ENCODE measurements at regions of chr10 and their contacts with region 1.

Region 1: DNA sequence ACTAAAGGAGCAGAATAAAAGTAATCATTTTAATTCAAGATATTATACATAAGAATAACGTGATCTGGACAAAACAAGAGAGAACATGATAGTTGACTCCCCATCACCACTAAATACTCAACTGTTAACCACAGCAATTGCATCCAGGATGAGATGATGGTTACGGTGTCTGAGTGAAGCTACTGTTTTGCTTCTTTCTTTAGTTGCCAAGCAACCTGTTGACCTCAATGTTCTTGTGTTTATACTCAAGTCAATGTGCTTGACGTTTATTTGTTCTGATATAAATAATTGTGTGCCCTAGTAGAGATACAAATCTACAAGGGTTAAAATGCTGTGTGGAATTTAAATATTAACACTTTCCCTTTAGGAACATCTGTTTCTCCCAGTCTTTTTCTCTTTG is 31.4 kb upstream of the MPP7 start:
- DNase-seq: no peak
- ATAC-seq: no peak
- H3K4me3 ChIP-seq: no peak overlapping the region
- H3K27ac ChIP-seq: no peak overlapping the region
- H3K4me1 ChIP-seq: no peaks in the 10 kb centered on the region
- H3K27me3 ChIP-seq: no peaks in the 10 kb centered on the region
- CTCF ChIP-seq: no peak

Region 2: DNA sequence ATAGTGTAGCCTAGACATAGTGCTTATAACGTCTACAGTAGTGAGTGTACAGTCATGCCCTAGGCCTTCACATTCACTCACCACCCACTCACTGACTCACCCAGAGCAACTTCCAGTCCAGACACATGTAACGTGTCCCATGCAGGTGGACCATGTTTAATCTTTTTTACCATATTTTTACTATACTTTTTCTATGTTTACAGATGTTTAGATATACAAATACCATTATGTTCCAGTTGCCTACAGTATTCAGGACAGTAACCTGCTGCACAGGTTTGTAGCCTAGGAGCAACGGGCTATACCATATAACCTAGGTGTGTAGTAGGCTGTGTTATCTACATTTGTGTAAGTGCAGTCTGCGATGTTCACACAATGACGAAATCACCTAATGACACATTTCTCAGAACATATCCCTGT is 42.4 kb before region 1 on chr10:
- CTCF ChIA-PET with region 1: no interaction called
- POLR2A ChIA-PET with region 1: no interaction called
- in situ Hi-C with region 1: no loop called
- intact Hi-C with region 1: no loop called
- DNase-seq: no peak
- ATAC-seq: no peak
- H3K4me3 ChIP-seq: no peak overlapping the region
- H3K27ac ChIP-seq: no peak overlapping the region
- H3K4me1 ChIP-seq: no peaks in the 10 kb centered on the region
- H3K27me3 ChIP-seq: no peaks in the 10 kb centered on the region
- CTCF ChIP-seq: no peak

Region 3: GRCh38 chr10:28359334-28359733 is 25.0 kb after region 1 on chr10:
- CTCF ChIA-PET with region 1: interaction called, 11 read pairs
- POLR2A ChIA-PET with region 1: no interaction called
- in situ Hi-C with region 1: no loop called
- intact Hi-C with region 1: no loop called
- DNase-seq: no peak
- ATAC-seq: no peak
- H3K4me3 ChIP-seq: no peak overlapping the region
- H3K27ac ChIP-seq: no peak overlapping the region
- H3K4me1 ChIP-seq: no peaks in the 10 kb centered on the region
- H3K27me3 ChIP-seq: no peaks in the 10 kb centered on the region
- CTCF ChIP-seq: no peak

Region 4: DNA sequence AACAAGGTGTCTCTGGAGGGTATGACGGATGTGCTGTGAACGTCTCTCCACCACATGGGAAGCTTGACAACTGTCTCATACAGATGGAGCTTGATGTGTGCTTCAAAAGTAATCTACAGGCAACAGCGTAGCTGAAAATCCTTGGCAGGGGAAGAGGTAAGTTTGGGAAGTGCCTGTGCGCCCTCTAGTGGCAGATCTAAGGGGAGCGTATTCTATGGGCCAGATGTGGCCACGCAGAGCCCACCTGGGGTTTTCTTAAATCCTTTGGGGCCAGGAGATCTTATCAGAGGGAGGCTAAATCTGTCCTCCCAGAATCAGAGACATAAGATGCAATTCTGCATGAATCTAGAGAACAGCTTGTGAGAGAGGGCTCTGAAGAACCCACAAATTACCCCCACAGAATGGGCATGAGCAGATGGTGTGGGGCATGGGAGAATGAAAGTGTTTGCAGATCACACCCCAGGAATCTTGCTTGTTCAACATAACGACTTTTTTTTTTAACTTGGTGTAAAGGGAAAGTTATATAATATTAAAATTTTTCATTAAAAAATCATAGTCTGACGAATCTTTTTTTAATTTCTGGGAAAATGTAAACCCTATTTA is 59.8 kb after region 1 on chr10:
- CTCF ChIA-PET with region 1: interaction called, 11 read pairs
- POLR2A ChIA-PET with region 1: no interaction called
- in situ Hi-C with region 1: no loop called
- intact Hi-C with region 1: no loop called
- DNase-seq: peak; percentile 50
- ATAC-seq: peak; percentile 94
- H3K4me3 ChIP-seq: no peak overlapping the region
- H3K27ac ChIP-seq: no peak overlapping the region
- H3K4me1 ChIP-seq: no peaks in the 10 kb centered on the region
- H3K27me3 ChIP-seq: peaks cover 3% of the 10 kb centered on the region; the same call in 1 of the 2 replicates
- CTCF ChIP-seq: peak; percentile 91

Measured in Panc1 (cell line).